Activated T-helper 2 cell treated with anti-CD3 and anti-CD28 coated beads, Interferon-gamma antibody, Interleukin-2, Interleukin-4, amounts not matched to agents 10 μg/mL and 5 μg/mL and 100 μg/mL, durations not matched to agents 14 hours and 24 hours and 36 hours (primary cell): ENCODE measurements at regions of chr16 and their contacts with region 1.

Region 1: DNA sequence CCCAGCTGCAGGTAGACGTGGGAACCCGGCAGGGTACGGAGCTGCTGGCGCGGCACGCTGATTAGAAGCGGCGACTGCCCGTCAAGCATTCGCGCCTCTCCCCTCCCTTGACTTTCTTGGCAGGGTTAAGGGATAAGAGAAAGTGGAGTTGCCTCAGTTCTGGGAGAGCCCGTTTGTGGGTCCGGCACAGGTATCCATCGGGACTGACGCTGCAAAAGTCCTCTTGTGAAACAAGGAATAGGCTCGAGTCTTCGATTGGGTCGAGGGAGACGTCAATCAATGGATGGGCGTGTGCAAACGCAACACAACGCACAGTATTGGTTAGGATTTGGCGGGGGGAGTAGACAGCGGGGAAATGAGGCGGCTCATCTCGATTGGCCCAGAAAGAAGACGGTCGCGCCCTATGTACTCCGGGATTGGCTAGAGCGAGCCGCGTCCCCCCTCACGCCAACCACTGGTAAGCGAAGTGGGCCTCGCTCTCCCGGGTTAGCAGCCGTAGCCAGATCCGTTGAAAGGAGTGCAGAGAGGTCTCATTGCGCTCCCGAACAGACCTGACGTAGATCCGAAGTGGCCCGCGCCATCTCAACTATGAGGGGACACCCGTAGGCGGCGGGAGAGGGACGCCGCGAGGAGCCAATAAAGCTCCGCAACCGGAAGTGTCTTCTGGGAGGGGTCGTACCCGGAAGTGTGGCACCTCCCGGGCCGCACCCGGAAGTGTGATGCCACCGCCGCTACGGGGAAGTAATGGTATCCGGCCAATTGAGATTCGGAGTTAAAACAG is at the start of gene MON1B:
- DNase-seq: peak; percentile 94
- H3K4me3 Mint-ChIP-seq: peak within 1 kb of the TSS; percentile 97
- H3K27ac Mint-ChIP-seq: peak within 1 kb of the TSS; percentile 100
- H3K4me1 Mint-ChIP-seq: peaks cover 28% of the 10 kb centered on the region
- H3K27me3 Mint-ChIP-seq: peaks cover 3% of the 10 kb centered on the region
- total RNA-seq, gene MON1B: 69.2 and 69.6 TPM in 2 replicates

Region 2: DNA sequence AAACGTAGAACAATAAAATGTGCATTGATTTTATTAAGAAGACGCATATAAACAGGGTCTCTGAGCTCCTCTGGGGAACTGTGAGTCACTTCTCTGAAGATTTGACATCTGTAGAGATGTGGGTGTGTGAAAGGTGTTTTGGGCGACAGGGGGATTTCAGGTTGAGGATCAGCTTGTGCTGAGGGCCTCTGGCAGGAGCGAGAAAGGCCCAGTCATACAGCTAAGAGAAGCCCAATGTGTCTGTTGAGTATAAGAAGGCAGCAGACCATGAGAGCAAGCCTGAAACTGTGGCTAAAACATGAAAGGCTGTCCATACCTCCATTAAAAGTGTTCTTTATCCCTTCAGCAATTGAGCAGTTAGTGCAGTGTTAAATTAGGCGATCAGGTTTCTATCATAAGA is 406.1 kb before region 1 on chr16:
- intact Hi-C with region 1: no loop called
- DNase-seq: no peak
- H3K4me3 Mint-ChIP-seq: no peak overlapping the region
- H3K27ac Mint-ChIP-seq: no peak overlapping the region
- H3K4me1 Mint-ChIP-seq: no peaks in the 10 kb centered on the region
- H3K27me3 Mint-ChIP-seq: no peaks in the 10 kb centered on the region

Region 3: DNA sequence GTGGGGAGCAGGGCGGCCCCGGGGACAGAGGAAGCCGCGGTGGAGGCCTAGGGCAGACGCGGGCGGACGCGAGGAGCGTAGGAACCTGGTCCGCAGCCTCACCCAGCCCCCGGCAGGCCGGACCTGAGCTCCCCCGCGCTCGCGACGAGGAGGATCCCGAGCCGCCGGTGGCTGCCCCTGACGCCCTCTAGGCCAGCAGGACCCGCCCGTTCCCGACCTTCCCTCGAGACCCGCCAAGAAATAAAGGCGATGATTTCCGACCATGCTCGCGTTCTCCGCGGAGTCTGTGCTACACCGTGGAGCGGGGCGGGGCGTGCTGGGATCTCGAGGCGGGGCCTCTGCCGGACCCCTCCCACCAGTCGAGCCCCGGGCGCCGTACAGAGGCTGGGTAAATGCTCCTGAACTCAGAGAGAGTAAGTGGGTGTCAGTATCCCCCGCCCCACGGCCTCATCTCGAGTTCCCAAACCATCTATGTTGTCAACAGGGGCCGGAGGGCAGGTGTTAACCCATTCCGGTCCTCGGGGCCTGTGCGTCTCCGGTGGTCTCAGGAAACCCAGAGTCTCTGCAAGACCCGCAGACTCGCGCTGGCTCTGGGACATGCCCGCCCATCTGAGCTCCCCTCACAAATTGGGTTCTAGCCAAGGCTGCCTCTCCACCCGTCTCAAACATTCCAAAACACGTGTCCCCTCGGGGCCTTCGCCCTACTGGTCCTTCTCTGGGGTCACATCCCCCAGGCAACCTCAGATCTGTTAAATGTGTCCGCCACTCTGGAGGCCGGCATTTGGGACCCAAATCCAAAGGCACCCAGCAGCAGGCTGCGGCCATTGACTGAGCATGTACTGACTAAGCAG is 22.3 kb after region 1 on chr16:
- intact Hi-C with region 1: loop called (anchors 1 kb)
- DNase-seq: peak; percentile 70
- H3K4me3 Mint-ChIP-seq: peak overlapping the region; percentile 81
- H3K27ac Mint-ChIP-seq: peak overlapping the region; percentile 54
- H3K4me1 Mint-ChIP-seq: peaks cover 11% of the 10 kb centered on the region
- H3K27me3 Mint-ChIP-seq: no peaks in the 10 kb centered on the region

Region 4: GRCh38 chr16:77288222-77288621 is 97.6 kb after region 1 on chr16:
- intact Hi-C with region 1: no loop called
- DNase-seq: no peak
- H3K4me3 Mint-ChIP-seq: no peak overlapping the region
- H3K27ac Mint-ChIP-seq: no peak overlapping the region
- H3K4me1 Mint-ChIP-seq: no peaks in the 10 kb centered on the region
- H3K27me3 Mint-ChIP-seq: no peaks in the 10 kb centered on the region

Region 5: GRCh38 chr16:77722309-77723107 is 531.8 kb after region 1 on chr16 and contains the start of gene NUDT7:
- intact Hi-C with region 1: loop called (anchors 1 kb)
- DNase-seq: peak; percentile 93
- H3K4me3 Mint-ChIP-seq: peak within 1 kb of the TSS; percentile 81
- H3K27ac Mint-ChIP-seq: peak within 1 kb of the TSS; percentile 71
- H3K4me1 Mint-ChIP-seq: peaks cover 11% of the 10 kb centered on the region
- H3K27me3 Mint-ChIP-seq: no peaks in the 10 kb centered on the region
- total RNA-seq, gene NUDT7: 8.1 TPM in 2 replicates